Activated CD4-positive, alpha-beta T cell treated with anti-CD3 and anti-CD28 coated beads for 36 hours (primary cell): ENCODE measurements at regions of chr5 and their contacts with region 1.

Region 1: GRCh38 chr5:58239075-58239474 is 220.8 kb downstream of the PLK2 start:
- DNase-seq: no peak
- ATAC-seq: peak; percentile 30
- H3K4me3 Mint-ChIP-seq: no peak overlapping the region
- H3K27ac Mint-ChIP-seq: no peak overlapping the region
- H3K4me1 Mint-ChIP-seq: no peaks in the 10 kb centered on the region
- H3K27me3 Mint-ChIP-seq: no peaks in the 10 kb centered on the region

Region 2: DNA sequence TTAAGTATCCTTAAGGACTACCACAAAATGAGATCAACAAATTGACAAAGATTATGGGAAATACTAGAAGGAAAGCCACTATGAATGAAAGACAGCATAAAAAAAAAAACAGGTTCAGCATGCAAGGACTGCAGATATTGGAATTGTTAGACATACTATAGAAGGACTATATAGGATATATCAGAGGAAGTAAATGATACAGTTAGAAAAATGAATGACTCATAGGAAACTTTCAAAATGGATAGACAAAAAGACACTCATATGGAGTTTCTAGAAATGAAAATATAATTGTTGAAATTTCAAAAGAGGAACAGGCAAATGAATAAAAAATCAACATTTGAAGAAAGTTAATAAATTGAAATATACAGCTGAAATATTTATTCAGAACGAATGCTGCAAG is 40.2 kb after region 1 on chr5:
- CTCF ChIA-PET with region 1: no interaction called
- POLR2A ChIA-PET with region 1: no interaction called
- intact Hi-C with region 1: loop called in 1 of 2 experiments (anchors 1 kb)
- DNase-seq: no peak
- ATAC-seq: peak; percentile 74
- H3K4me3 Mint-ChIP-seq: no peak overlapping the region
- H3K27ac Mint-ChIP-seq: no peak overlapping the region
- H3K4me1 Mint-ChIP-seq: peaks cover 3% of the 10 kb centered on the region
- H3K27me3 Mint-ChIP-seq: peaks cover 10% of the 10 kb centered on the region